ENCODE measurements at regions of chr14 and their contacts with region 1.

Region 1: GRCh38 chr14:103808403-103809001 is 38.9 kb downstream of the PPP1R13B start:
- DNase-seq: peak; percentile 88
- H3K4me3 Mint-ChIP-seq: no peak overlapping the region
- H3K27ac Mint-ChIP-seq: no peak overlapping the region
- H3K4me1 Mint-ChIP-seq: peaks cover 14% of the 10 kb centered on the region
- H3K27me3 Mint-ChIP-seq: no peaks in the 10 kb centered on the region
- CTCF ChIP-seq: peak; percentile 83

Region 2: DNA sequence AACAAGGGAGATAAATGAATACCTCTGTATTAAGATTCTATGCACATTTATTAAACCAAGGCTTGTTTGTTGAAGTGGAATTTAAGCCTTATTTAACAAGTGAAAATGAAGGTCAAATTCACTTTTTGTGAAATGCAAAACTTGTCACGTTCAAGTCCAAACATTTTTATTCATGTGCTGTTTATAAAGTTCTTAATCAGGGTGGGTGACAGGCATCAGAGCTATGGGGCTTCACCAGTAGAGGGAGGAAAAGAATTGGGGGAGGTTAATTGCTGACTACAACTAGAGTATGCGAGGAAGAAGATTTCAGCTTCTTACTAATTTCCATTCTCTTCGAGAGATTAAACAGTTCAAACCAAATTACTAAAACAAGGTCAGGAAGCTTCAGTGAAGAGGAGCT is 1513.2 kb before region 1 on chr14:
- CTCF ChIA-PET with region 1: no interaction called
- POLR2A ChIA-PET with region 1: no interaction called
- intact Hi-C with region 1: no loop called
- DNase-seq: no peak
- H3K4me3 Mint-ChIP-seq: no peak overlapping the region
- H3K27ac Mint-ChIP-seq: no peak overlapping the region
- H3K4me1 Mint-ChIP-seq: peaks cover 6% of the 10 kb centered on the region
- H3K27me3 Mint-ChIP-seq: no peaks in the 10 kb centered on the region
- CTCF ChIP-seq: no peak

Region 3: GRCh38 chr14:103581936-103582703 is 226.4 kb before region 1 on chr14:
- CTCF ChIA-PET with region 1: no interaction called
- POLR2A ChIA-PET with region 1: no interaction called
- intact Hi-C with region 1: no loop called
- DNase-seq: peak; percentile 24
- H3K4me3 Mint-ChIP-seq: no peak overlapping the region
- H3K27ac Mint-ChIP-seq: no peak overlapping the region
- H3K4me1 Mint-ChIP-seq: peaks cover 6% of the 10 kb centered on the region
- H3K27me3 Mint-ChIP-seq: no peaks in the 10 kb centered on the region
- CTCF ChIP-seq: no peak

Region 4: GRCh38 chr14:103867523-103867953 is 59.0 kb after region 1 on chr14:
- CTCF ChIA-PET with region 1: interaction called, 9 read pairs
- POLR2A ChIA-PET with region 1: interaction called, 10 read pairs
- intact Hi-C with region 1: no loop called
- DNase-seq: peak; percentile 84
- H3K4me3 Mint-ChIP-seq: no peak overlapping the region
- H3K27ac Mint-ChIP-seq: peak overlapping the region; percentile 50
- H3K4me1 Mint-ChIP-seq: peaks cover 21% of the 10 kb centered on the region
- H3K27me3 Mint-ChIP-seq: no peaks in the 10 kb centered on the region
- CTCF ChIP-seq: no peak

Region 5: GRCh38 chr14:103904493-103905107 is 96.1 kb after region 1 on chr14:
- CTCF ChIA-PET with region 1: interaction called, 121 read pairs
- POLR2A ChIA-PET with region 1: interaction called, 22 read pairs
- intact Hi-C with region 1: no loop called
- DNase-seq: no peak
- H3K4me3 Mint-ChIP-seq: no peak overlapping the region
- H3K27ac Mint-ChIP-seq: no peak overlapping the region
- H3K4me1 Mint-ChIP-seq: no peaks in the 10 kb centered on the region
- H3K27me3 Mint-ChIP-seq: no peaks in the 10 kb centered on the region
- CTCF ChIP-seq: no peak

Region 6: GRCh38 chr14:103984196-103984595 is 175.7 kb after region 1 on chr14:
- CTCF ChIA-PET with region 1: interaction called, 99 read pairs
- POLR2A ChIA-PET with region 1: interaction called, 5 read pairs
- intact Hi-C with region 1: loop called (anchors 1 kb)
- DNase-seq: no peak
- H3K4me3 Mint-ChIP-seq: no peak overlapping the region
- H3K27ac Mint-ChIP-seq: no peak overlapping the region
- H3K4me1 Mint-ChIP-seq: no peaks in the 10 kb centered on the region
- H3K27me3 Mint-ChIP-seq: peaks cover 14% of the 10 kb centered on the region
- CTCF ChIP-seq: no peak

Region 7: GRCh38 chr14:104130974-104131651 is 322.6 kb after region 1 on chr14:
- CTCF ChIA-PET with region 1: interaction called, 3 read pairs
- POLR2A ChIA-PET with region 1: no interaction called
- intact Hi-C with region 1: loop called (anchors 2 kb)
- DNase-seq: peak; percentile 61
- H3K4me3 Mint-ChIP-seq: no peak overlapping the region
- H3K27ac Mint-ChIP-seq: no peak overlapping the region
- H3K4me1 Mint-ChIP-seq: no peaks in the 10 kb centered on the region
- H3K27me3 Mint-ChIP-seq: peaks cover 55% of the 10 kb centered on the region
- CTCF ChIP-seq: peak; percentile 80

Region 8: GRCh38 chr14:104436047-104436591 is 627.6 kb after region 1 on chr14:
- CTCF ChIA-PET with region 1: no interaction called
- POLR2A ChIA-PET with region 1: no interaction called
- intact Hi-C with region 1: no loop called
- DNase-seq: peak; percentile 13
- H3K4me3 Mint-ChIP-seq: no peak overlapping the region
- H3K27ac Mint-ChIP-seq: no peak overlapping the region
- H3K4me1 Mint-ChIP-seq: no peaks in the 10 kb centered on the region
- H3K27me3 Mint-ChIP-seq: peaks cover 27% of the 10 kb centered on the region
- CTCF ChIP-seq: no peak